Esophagus muscularis mucosa (tissue), 4 donors: ENCODE measurements at regions of chr6 and their contacts with region 1.

Region 1: DNA sequence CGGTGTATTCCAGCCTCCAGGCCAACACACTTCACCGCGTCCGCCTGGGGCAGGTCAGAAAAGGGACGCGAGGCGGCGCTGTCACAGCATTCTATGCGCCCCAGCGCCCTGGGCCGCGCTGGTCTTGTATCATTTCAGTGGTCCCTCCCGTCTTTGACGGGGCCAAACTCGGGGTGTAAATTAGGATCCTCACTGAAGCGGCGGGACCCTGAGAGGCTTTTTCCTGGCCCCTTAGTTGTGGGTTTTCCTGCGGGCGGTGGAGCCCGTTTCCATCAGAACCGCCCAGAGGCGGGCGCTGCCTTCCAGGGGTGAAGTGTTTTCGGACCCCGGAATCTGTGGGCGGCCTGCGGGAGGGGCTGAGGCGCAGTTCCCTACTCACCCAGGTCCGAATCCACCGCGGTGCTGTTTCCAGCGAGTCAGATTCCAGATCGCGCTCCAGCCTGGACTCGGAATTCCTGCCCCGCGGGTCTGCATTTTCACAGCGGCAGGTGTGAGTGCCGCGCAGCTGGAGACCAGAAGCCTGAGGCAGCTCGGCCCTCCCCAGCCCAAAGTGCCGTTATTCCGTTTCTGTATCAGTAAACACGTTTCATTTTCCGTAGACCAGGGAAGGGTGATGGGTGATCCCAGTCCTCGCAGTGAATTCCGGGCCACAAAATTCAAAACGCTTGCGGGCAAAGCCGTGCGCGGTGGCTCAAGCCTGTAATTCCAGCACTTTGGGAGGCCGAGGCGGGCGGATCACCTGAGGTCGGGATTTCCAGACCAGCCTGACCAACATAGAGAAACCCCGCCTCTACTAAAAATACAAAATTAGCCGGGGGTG is 3.9 kb upstream of the MICB start:
- DNase-seq: peak; percentile 95
- H3K4me3 ChIP-seq: peak overlapping the region; percentile 54 to 78 (median 56)
- H3K27ac ChIP-seq: peak overlapping the region; percentile 66 to 84 (median 68)
- H3K4me1 ChIP-seq: peaks cover 10 to 47% (median 40%) of the 10 kb centered on the region in 4 donors
- H3K27me3 ChIP-seq: peaks cover 0 to 66% (median 14%) of the 10 kb centered on the region in 4 donors
- CTCF ChIP-seq: peak; percentile 61 to 78 (median 77)
- EP300 ChIP-seq: no peak
- POLR2A ChIP-seq: no peak

Region 2: GRCh38 chr6:31541658-31542521 is 47.8 kb after region 1 on chr6 and contains the start of gene DDX39B:
- intact Hi-C with region 1: loop called (anchors 5 kb)
- DNase-seq: peak; percentile 98
- H3K4me3 ChIP-seq: peak within 1 kb of the TSS; percentile 63 to 82 (median 72)
- H3K27ac ChIP-seq: peak within 1 kb of the TSS; percentile 86 to 98 (median 90)
- H3K4me1 ChIP-seq: peaks cover 37 to 64% (median 59%) of the 10 kb centered on the region in 4 donors
- H3K27me3 ChIP-seq: no peaks in the 10 kb centered on the region
- CTCF ChIP-seq: no peak
- EP300 ChIP-seq: no peak
- POLR2A ChIP-seq: peak; percentile 60
- total RNA-seq, gene DDX39B: 186 to 257 (median 213) TPM

Region 3: GRCh38 chr6:31559958-31560696 is 66.0 kb after region 1 on chr6:
- intact Hi-C with region 1: no loop called
- DNase-seq: no peak
- H3K4me3 ChIP-seq: no peak overlapping the region
- H3K27ac ChIP-seq: peak overlapping the region; percentile 28 to 60 (median 50)
- H3K4me1 ChIP-seq: peaks cover 33 to 46% (median 39%) of the 10 kb centered on the region in 4 donors
- H3K27me3 ChIP-seq: no peaks in the 10 kb centered on the region
- CTCF ChIP-seq: no peak
- EP300 ChIP-seq: no peak
- POLR2A ChIP-seq: no peak

Region 4: DNA sequence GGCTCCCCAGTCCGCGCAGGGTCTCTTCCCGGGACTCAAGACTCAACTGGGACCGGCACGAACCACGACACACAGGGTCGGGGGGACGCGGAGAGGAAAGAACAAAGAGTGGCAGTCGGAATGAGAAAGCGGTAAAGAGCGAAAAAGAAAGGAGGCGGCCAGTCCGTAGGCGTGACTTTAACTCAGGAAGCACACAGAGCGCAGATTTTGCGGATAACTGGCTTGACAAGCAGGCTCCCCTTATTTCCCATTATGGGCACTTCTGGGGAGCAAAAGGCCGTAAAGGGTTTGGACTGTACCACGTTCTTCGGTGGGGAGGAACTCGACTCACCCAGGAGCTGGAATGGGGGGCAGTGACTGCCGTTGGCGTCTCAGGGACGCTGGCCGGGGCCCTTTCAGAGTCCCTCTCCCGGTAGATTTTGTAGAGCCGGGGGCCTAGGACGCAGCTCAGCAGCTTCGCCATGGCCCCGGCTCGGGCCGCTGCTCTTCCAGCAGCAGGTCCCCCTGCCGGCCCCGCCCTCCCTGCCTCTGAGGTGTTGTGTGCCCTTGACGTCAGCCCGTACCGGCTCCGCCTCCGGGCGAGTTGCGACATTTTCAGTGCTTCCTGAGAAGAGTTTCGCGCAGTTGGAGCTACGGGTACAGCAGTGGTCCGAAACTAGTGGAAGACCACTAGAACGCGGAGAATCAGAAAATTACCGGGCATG is 208.9 kb after region 1 on chr6 and contains the start of gene ABHD16A:
- intact Hi-C with region 1: no loop called
- DNase-seq: peak; percentile 100
- H3K4me3 ChIP-seq: peak within 1 kb of the TSS; percentile 64 to 86 (median 80)
- H3K27ac ChIP-seq: peak within 1 kb of the TSS; percentile 90 to 99 (median 97)
- H3K4me1 ChIP-seq: peaks cover 21 to 41% (median 32%) of the 10 kb centered on the region in 4 donors
- H3K27me3 ChIP-seq: no peaks in the 10 kb centered on the region
- CTCF ChIP-seq: peak in 1 of 3 experiments; percentile 20
- EP300 ChIP-seq: no peak
- POLR2A ChIP-seq: peak; percentile 99
- total RNA-seq, gene ABHD16A: 44.9 to 57.9 (median 52.8) TPM